ENCODE measurements at regions of chr14 and their contacts with region 1.

Region 1: DNA sequence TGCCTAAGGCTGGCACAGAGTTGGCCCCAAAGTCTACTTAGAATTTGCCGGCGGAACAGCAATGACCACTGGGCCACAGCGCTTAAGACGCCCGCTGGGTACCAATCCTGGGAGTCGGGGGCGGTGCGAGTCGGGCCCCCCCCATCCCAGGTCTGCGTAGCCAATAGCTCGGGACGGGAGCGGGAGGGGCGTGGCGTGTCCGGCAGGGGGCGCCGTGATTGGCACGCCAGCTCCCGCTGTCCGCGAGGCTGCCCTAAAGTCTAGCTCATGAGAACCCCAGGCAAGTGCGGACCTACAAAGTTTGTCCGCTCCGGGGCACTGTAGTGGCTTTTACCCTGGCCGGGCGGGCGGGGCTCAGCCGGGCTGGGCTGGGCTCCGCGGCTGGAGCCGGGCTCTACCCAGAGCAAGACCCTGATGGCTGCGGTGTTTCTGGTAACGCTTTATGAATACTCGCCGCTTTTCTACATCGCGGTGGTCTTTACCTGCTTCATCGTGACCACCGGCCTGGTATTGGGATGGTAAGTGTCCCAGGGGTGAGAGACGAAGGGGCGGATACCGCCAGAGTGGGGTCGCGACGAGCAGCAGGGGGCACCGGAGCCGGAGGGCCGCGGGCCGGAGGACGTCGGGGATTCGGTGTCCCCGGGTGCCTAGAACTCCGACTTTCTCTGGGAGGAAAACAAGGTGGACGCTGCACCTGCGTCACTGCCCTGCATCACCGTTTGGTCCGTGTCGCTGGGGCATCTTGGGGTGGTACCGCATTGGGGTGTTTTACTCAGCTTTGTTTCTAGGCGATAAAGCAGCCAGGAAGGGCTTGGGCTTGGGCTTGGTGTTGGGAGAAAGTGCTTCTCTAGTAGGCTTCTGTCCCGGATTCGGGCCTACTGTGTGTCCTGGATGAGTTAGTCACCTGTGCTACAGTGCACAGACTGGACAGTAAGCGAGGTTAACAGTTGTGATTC is at the start of gene CGRRF1:
- DNase-seq: peak; percentile 96

Region 2: DNA sequence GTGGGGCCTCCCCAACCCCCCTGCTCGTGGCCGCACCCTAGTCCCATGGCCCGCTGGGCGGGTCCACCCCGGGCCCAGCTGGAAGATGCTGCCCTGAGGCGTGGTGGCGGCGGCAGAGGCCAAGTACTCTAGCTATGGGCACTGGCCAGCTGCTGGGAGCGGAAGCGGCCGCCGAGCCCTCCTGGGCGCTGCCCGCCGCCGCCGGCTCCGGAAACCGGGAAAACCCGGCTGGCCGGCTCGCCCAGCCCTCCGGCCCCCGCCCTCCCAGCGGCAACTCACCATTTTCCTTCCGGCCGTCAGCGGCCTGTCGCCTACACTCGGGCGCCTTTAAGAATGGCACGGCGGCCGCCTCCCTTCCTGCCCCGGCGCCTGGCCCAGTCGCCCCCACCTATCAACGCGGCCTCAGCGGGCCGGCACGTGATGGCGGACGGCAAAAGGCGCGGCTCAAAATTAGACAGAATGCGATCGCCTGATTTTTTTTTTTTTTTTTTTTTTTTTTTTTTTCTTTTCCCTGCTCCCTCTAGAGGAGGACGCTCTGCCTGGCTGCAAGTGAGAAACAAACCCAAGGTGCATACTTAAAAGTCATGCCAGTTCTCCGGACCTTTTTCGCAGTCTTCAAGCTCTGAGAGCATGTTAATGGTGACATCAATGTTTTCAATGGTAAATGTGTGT is 21.0 kb before region 1 on chr14 and contains the start of gene GMFB:
- CTCF ChIA-PET with region 1: interaction called, 3 read pairs
- POLR2A ChIA-PET with region 1: interaction called, 22 read pairs
- DNase-seq: peak; percentile 84

Measured in HEK293T (cell line).